Activated B cell treated with CpG ODN at 0.5 μM for 24 hours (primary cell): ENCODE measurements at regions of chr2 and their contacts with region 1.

Region 1: GRCh38 chr2:171999604-172000469 is at the start of gene METAP1D:
- DNase-seq: peak; percentile 86
- ATAC-seq: peak; percentile 96
- H3K4me3 Mint-ChIP-seq: peak within 1 kb of the TSS; percentile 95
- H3K27ac Mint-ChIP-seq: peak within 1 kb of the TSS; percentile 96
- H3K4me1 Mint-ChIP-seq: peaks cover 21% of the 10 kb centered on the region
- H3K27me3 Mint-ChIP-seq: peaks cover 4% of the 10 kb centered on the region
- CTCF ChIP-seq: no peak
- total RNA-seq, gene METAP1D: 7.7 and 13.7 TPM in 2 replicates

Region 2: GRCh38 chr2:171893824-171894611 is 105.8 kb before region 1 on chr2 and contains the start of gene SLC25A12:
- CTCF ChIA-PET with region 1: no interaction called
- POLR2A ChIA-PET with region 1: interaction called, 8 read pairs
- intact Hi-C with region 1: loop called (anchors 1 kb)
- DNase-seq: peak; percentile 81
- ATAC-seq: peak; percentile 95
- H3K4me3 Mint-ChIP-seq: peak within 1 kb of the TSS; percentile 98
- H3K27ac Mint-ChIP-seq: peak within 1 kb of the TSS; percentile 85
- H3K4me1 Mint-ChIP-seq: peaks cover 23% of the 10 kb centered on the region
- H3K27me3 Mint-ChIP-seq: no peaks in the 10 kb centered on the region
- CTCF ChIP-seq: no peak
- total RNA-seq, gene SLC25A12: 18.8 and 22.2 TPM in 2 replicates

Region 3: GRCh38 chr2:171966268-171966667 is 33.6 kb before region 1 on chr2:
- CTCF ChIA-PET with region 1: no interaction called
- POLR2A ChIA-PET with region 1: no interaction called
- intact Hi-C with region 1: no loop called
- DNase-seq: no peak
- ATAC-seq: no peak
- H3K4me3 Mint-ChIP-seq: no peak overlapping the region
- H3K27ac Mint-ChIP-seq: no peak overlapping the region
- H3K4me1 Mint-ChIP-seq: no peaks in the 10 kb centered on the region
- H3K27me3 Mint-ChIP-seq: no peaks in the 10 kb centered on the region
- CTCF ChIP-seq: no peak

Region 4: GRCh38 chr2:173783382-173783781 is 1783.5 kb after region 1 on chr2:
- CTCF ChIA-PET with region 1: no interaction called
- POLR2A ChIA-PET with region 1: no interaction called
- intact Hi-C with region 1: no loop called
- DNase-seq: no peak
- ATAC-seq: no peak
- H3K4me3 Mint-ChIP-seq: no peak overlapping the region
- H3K27ac Mint-ChIP-seq: no peak overlapping the region
- H3K4me1 Mint-ChIP-seq: no peaks in the 10 kb centered on the region
- H3K27me3 Mint-ChIP-seq: peaks cover 19% of the 10 kb centered on the region
- CTCF ChIP-seq: no peak